ENCODE measurements at regions of chr3 and their contacts with region 1.

Region 1: GRCh38 chr3:191170097-191170496 is 28.9 kb upstream of the OSTN start:
- DNase-seq: no peak
- H3K4me3 ChIP-seq: no peak overlapping the region
- H3K27ac ChIP-seq: no peak overlapping the region
- H3K4me1 ChIP-seq: no peaks in the 10 kb centered on the region
- H3K27me3 ChIP-seq: no peaks in the 10 kb centered on the region
- CTCF ChIP-seq: no peak

Region 2: DNA sequence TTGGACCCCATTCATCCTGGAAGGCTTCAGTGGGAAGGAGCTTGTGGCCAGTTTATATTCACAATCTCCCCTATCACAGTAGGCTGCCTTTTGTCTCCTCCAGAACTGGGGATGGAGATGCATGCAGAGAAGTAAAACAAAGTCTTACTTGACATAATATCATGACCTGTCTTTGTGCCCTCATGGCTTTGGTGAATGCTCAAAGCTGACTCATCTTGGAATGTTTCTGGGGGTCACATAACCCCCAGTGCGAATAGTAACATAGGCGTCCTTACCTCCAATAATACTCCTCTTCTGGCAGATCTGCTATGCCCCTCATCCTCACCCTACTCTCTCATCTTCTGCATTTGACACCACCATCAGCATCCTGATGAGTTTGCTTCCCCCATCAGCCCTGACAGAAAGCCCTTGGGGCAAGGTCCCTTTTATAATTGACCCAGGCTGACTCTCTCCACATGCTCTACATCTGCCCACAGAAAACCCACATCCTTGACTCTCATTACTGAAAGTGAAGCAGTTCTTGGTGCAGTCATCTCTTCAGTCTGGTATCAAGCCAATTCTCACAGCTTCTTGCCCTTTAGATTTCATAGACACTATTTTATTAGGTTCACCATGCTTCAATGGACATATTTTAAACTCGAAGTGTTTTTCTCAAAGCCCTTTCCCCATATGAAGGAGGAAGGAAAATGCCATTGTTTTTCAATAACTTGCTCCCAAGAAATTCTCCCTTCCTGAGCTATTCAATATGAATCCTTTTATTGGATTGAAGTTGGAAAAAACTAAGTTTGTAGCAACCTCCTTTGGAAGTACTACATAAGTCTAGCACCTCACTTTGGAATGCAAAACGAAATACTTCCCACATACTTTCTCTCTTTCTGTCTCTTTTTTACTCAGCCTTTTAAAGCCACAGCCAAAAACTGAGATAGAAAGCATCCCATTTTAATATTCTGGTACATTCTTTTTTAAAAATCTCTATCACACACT is 65.5 kb after region 1 on chr3:
- CTCF ChIA-PET with region 1: interaction called, 13 read pairs
- dilution Hi-C with region 1: no loop called
- in situ Hi-C with region 1: no loop called
- intact Hi-C with region 1: no loop called
- DNase-seq: peak; percentile 9
- H3K4me3 ChIP-seq: no peak overlapping the region
- H3K27ac ChIP-seq: no peak overlapping the region
- H3K4me1 ChIP-seq: peaks cover 3% of the 10 kb centered on the region
- H3K27me3 ChIP-seq: no peaks in the 10 kb centered on the region
- CTCF ChIP-seq: no peak

Measured in mammary epithelial cell (primary cell).